Right ventricle myocardium inferior (tissue), 1 donor: ENCODE measurements at regions of chr5 and their contacts with region 1.

Region 1: GRCh38 chr5:153699035-153699434 is 208.6 kb downstream of the GRIA1 start:
- DNase-seq: no peak
- ATAC-seq: no peak

Region 2: GRCh38 chr5:153678617-153679329 is 20.3 kb before region 1 on chr5:
- intact Hi-C with region 1: loop called (anchors 1 kb)
- DNase-seq: no peak
- ATAC-seq: peak; percentile 67